ENCODE measurements at regions of chr6 and their contacts with region 1.

Region 1: DNA sequence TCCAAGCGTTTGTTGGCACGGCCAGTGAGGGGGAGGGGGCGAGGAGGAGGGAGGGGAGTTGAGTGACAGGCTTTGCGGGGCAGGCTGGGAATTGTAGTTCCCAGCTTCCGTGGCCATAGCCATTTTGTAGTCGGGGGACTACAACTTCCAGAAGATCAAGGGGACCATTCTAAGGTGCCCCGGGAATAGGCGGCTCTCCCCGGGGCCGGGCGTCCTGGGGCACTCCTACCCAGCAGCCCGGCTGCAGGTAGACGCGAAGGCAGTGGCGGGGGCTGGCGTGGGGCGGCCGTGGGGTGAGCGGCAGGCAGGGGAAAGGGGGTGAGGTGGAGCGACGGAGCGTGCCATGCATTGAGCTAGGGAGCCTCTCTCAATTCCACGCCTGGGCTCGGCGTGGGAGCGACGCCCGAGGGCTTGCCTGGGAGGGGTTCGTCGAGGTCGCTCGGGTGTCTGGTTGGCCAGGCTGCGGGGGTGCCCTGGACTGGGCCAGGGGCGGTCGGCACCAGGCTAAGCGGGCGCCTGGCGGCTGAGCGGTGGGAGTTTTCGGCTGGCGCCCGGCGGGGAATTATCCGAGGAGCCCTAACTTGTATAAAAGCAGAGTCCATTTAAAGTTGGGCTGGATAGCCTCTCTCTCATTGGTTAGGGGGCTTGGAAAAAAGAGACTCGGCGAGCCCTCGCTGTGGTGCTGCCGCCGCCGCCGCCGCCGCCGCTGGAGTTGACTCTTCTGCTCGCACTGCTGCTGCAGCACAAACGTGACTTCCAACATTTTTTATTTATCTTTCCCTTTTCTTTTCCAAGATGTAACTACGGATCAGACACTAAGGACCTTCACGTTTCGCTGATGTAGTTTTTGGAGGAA is at the start of gene JARID2:
- DNase-seq: peak; percentile 86 to 97 (median 94)
- ATAC-seq: peak; percentile 66
- H3K4me3 ChIP-seq: peak within 1 kb of the TSS; percentile 93
- H3K4me3 Mint-ChIP-seq: peak within 1 kb of the TSS; percentile 94 to 100 (median 99)
- H3K27ac ChIP-seq: peak within 1 kb of the TSS; percentile 93
- H3K27ac Mint-ChIP-seq: peak within 1 kb of the TSS; percentile 94 to 99 (median 97)
- H3K4me1 ChIP-seq: peaks cover 8 to 10% of the 10 kb centered on the region in 2 donors
- H3K4me1 Mint-ChIP-seq: peaks cover 13 to 39% (median 26%) of the 10 kb centered on the region in 7 donors
- H3K27me3 ChIP-seq: no peaks in the 10 kb centered on the region
- H3K27me3 Mint-ChIP-seq: peaks cover 0 to 2% (median 0%) of the 10 kb centered on the region in 5 donors
- total RNA-seq, gene JARID2: 23.4 to 39.6 (median 29.9) TPM

Region 2: GRCh38 chr6:14117158-14118090 is 1128.2 kb before region 1 on chr6 and contains the start of gene CD83:
- CTCF ChIA-PET with region 1: no interaction called
- POLR2A ChIA-PET with region 1: no interaction called
- intact Hi-C with region 1: loop called (anchors 1 to 5 kb)
- DNase-seq: peak; percentile 79 to 89 (median 84)
- ATAC-seq: peak; percentile 94
- H3K4me3 ChIP-seq: peak within 1 kb of the TSS; percentile 91
- H3K4me3 Mint-ChIP-seq: peak within 1 kb of the TSS; percentile 87 to 97 (median 93)
- H3K27ac ChIP-seq: peak within 1 kb of the TSS; percentile 87
- H3K27ac Mint-ChIP-seq: peak within 1 kb of the TSS; percentile 91 to 96 (median 94)
- H3K4me1 ChIP-seq: peaks cover 11 to 15% of the 10 kb centered on the region in 2 donors
- H3K4me1 Mint-ChIP-seq: peaks cover 18 to 41% (median 28%) of the 10 kb centered on the region in 7 donors
- H3K27me3 ChIP-seq: no peaks in the 10 kb centered on the region
- H3K27me3 Mint-ChIP-seq: peaks cover 0 to 35% (median 0%) of the 10 kb centered on the region in 5 donors
- total RNA-seq, gene CD83: 5.0 to 113 (median 18.3) TPM

Region 3: GRCh38 chr6:14660806-14661579 is 584.6 kb before region 1 on chr6:
- CTCF ChIA-PET with region 1: no interaction called
- POLR2A ChIA-PET with region 1: no interaction called
- intact Hi-C with region 1: loop called in 1 of 2 experiments (anchors 2 kb)
- DNase-seq: peak in 8 of 9 donors; percentile 41 to 77 (median 58)
- ATAC-seq: peak; percentile 84
- H3K4me3 ChIP-seq: no peak overlapping the region
- H3K4me3 Mint-ChIP-seq: no peak overlapping the region
- H3K27ac ChIP-seq: peak overlapping the region; percentile 58
- H3K27ac Mint-ChIP-seq: no peak overlapping the region
- H3K4me1 ChIP-seq: peaks cover 14 to 56% of the 10 kb centered on the region in 2 donors
- H3K4me1 Mint-ChIP-seq: peaks cover 31 to 48% (median 36%) of the 10 kb centered on the region in 7 donors
- H3K27me3 ChIP-seq: no peaks in the 10 kb centered on the region
- H3K27me3 Mint-ChIP-seq: peaks cover 0 to 18% (median 0%) of the 10 kb centered on the region in 5 donors

Region 4: DNA sequence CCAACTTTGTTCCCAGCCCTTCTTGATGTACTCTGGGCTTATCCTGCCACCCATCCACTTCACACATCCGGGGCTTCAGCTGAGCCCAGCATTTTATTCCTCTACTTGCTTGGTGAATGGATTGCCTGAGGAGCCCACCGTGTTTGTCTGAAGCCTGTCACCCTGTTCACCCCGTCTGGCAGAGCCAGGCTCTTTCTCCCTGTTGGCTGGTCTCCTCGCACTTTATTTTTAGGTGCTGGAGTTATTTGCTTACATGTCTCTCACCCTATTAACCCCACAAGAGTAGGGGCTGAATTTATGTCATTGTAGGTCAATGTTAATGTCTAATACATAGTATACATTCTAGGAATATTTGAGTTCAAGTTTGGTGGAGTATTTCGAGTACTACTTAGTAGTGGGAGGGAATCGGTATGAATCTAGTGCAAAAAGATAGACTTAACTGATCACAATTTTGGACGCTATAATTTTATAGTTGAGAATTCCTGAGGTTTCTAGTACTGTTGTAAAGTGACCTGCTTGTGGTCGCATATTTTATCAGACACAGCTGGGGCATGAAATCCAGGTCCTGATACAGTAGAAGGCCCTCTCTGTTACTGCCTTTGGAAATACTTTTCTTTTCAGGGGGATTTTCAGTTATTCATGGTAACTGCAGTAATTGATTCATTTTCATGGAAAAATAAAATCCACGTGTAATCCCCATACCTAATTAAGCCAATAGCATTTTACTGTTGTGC is 11.1 kb after region 1 on chr6:
- CTCF ChIA-PET with region 1: no interaction called
- POLR2A ChIA-PET with region 1: interaction called, 3 read pairs
- intact Hi-C with region 1: loop called (anchors 1 kb)
- DNase-seq: no peak
- ATAC-seq: no peak
- H3K4me3 ChIP-seq: no peak overlapping the region
- H3K4me3 Mint-ChIP-seq: peak overlapping the region in 2 of 10 donors; percentile 10 to 39
- H3K27ac ChIP-seq: no peak overlapping the region
- H3K27ac Mint-ChIP-seq: peak overlapping the region in 7 of 9 donors; percentile 10 to 98 (median 60)
- H3K4me1 ChIP-seq: peaks cover 27 to 50% of the 10 kb centered on the region in 2 donors
- H3K4me1 Mint-ChIP-seq: peaks cover 86 to 99% (median 94%) of the 10 kb centered on the region in 7 donors
- H3K27me3 ChIP-seq: no peaks in the 10 kb centered on the region
- H3K27me3 Mint-ChIP-seq: no peaks in the 10 kb centered on the region

Region 5: GRCh38 chr6:15340775-15341174 is 95.2 kb after region 1 on chr6:
- CTCF ChIA-PET with region 1: no interaction called
- POLR2A ChIA-PET with region 1: interaction called, 3 read pairs
- intact Hi-C with region 1: loop called in 1 of 2 experiments (anchors 5 kb)
- DNase-seq: peak in 3 of 9 donors; percentile 24 to 35 (median 31)
- ATAC-seq: peak; percentile 40
- H3K4me3 ChIP-seq: no peak overlapping the region
- H3K4me3 Mint-ChIP-seq: peak overlapping the region; percentile 57 to 83 (median 74)
- H3K27ac ChIP-seq: peak overlapping the region; percentile 61
- H3K27ac Mint-ChIP-seq: peak overlapping the region; percentile 77 to 93 (median 89)
- H3K4me1 ChIP-seq: peaks cover 22 to 50% of the 10 kb centered on the region in 2 donors
- H3K4me1 Mint-ChIP-seq: peaks cover 57 to 99% (median 84%) of the 10 kb centered on the region in 7 donors
- H3K27me3 ChIP-seq: no peaks in the 10 kb centered on the region
- H3K27me3 Mint-ChIP-seq: no peaks in the 10 kb centered on the region

Region 6: GRCh38 chr6:15491255-15491985 is 245.8 kb after region 1 on chr6:
- CTCF ChIA-PET with region 1: no interaction called
- POLR2A ChIA-PET with region 1: no interaction called
- intact Hi-C with region 1: loop called (anchors 1 to 2 kb)
- DNase-seq: peak; percentile 48 to 77 (median 70)
- ATAC-seq: peak; percentile 88
- H3K4me3 ChIP-seq: no peak overlapping the region
- H3K4me3 Mint-ChIP-seq: peak overlapping the region in 6 of 10 donors; percentile 2 to 17 (median 3)
- H3K27ac ChIP-seq: peak overlapping the region; percentile 2
- H3K27ac Mint-ChIP-seq: peak overlapping the region; percentile 29 to 88 (median 67)
- H3K4me1 ChIP-seq: peaks cover 0 to 11% of the 10 kb centered on the region in 2 donors
- H3K4me1 Mint-ChIP-seq: peaks cover 24 to 58% (median 41%) of the 10 kb centered on the region in 7 donors
- H3K27me3 ChIP-seq: no peaks in the 10 kb centered on the region
- H3K27me3 Mint-ChIP-seq: no peaks in the 10 kb centered on the region